CD4-positive, alpha-beta T cell (primary cell): ENCODE measurements at regions of chr5 and their contacts with region 1.

Region 1: DNA sequence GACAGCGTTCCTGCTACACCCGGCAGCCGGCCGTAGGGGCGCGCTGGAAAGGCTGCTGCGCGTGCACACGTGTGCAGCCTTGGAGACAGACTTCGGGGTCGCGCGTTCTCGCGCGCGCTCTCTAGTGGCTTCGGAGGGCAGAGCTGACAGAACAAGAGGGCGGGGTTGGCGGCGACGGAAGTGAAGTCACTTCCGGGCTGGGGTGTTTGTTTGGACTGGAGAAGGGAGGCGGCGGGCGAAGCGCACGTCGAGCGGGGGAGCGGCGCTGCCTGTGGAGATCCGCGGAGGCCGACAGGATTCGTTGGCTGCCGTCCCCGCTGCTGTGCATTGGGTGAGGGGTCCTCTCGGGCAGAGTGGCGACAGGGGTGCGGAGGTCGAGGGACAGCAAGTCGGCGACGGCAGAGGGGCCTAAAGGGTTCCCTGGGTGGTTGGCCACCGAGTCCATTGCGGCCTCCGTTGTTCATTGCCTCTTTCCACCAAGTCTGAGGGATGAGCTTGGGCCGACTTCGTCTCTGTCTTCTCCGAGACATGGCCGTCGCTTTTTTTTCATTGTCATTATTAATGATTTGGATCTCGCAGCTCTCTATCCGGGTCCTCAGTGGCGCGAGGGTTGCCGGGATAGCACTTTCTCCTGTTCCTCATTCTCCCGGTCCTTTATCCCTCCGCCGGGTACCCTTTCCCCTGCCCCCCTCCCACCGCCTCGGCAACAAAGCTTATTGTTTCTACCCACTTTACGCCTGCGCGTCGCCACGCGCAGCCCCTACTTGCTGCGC is at the start of gene PAIP2:
- DNase-seq: peak; percentile 95 to 99 (median 97)
- ATAC-seq: peak; percentile 82
- H3K4me3 ChIP-seq: peak within 1 kb of the TSS; percentile 94
- H3K4me3 Mint-ChIP-seq: peak within 1 kb of the TSS; percentile 96
- H3K27ac ChIP-seq: peak within 1 kb of the TSS; percentile 100
- H3K27ac Mint-ChIP-seq: peak within 1 kb of the TSS; percentile 95
- H3K4me1 ChIP-seq: peaks cover 34% of the 10 kb centered on the region
- H3K4me1 Mint-ChIP-seq: peaks cover 65% of the 10 kb centered on the region
- H3K27me3 ChIP-seq: no peaks in the 10 kb centered on the region
- H3K27me3 Mint-ChIP-seq: no peaks in the 10 kb centered on the region
- CTCF ChIP-seq: peak; percentile 70
- total RNA-seq, gene PAIP2: 151 to 156 TPM

Region 2: DNA sequence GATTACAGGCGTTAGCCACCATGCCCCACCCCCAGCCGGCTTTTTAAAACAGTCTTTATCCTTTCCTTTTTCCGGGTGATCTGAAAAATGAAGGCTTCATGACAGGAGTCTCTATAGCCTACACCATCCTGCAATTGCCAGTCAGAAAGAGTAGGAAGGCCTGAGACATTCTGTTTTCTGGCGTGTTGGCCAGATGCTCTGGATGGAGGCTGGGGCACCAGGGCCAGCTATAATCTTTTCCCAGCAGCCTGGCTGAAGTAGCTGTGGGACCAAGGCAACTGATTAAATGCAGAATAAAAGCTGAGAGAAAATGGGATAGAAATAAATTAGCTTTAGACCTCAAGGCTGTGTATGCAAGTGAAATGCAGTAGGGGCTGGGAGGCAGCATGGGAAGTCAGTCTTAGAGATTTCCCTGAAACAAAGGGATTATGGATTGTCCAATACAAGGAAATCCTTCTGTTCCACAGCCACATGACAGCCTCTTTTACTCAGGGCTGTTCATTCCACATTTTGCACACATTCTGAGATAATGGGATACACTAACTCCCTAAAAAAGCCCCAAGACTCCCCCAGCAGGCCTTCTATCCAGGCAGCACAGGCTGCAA is 350.7 kb before region 1 on chr5:
- CTCF ChIA-PET with region 1: no interaction called
- POLR2A ChIA-PET with region 1: no interaction called
- intact Hi-C with region 1: no loop called
- DNase-seq: no peak
- ATAC-seq: no peak
- H3K4me3 ChIP-seq: no peak overlapping the region
- H3K4me3 Mint-ChIP-seq: no peak overlapping the region
- H3K27ac ChIP-seq: no peak overlapping the region
- H3K27ac Mint-ChIP-seq: no peak overlapping the region
- H3K4me1 ChIP-seq: no peaks in the 10 kb centered on the region
- H3K4me1 Mint-ChIP-seq: no peaks in the 10 kb centered on the region
- H3K27me3 ChIP-seq: no peaks in the 10 kb centered on the region
- H3K27me3 Mint-ChIP-seq: no peaks in the 10 kb centered on the region
- CTCF ChIP-seq: no peak

Region 3: GRCh38 chr5:139293504-139294373 is 48.1 kb before region 1 on chr5 and contains the start of gene MATR3:
- CTCF ChIA-PET with region 1: interaction called, 12 read pairs
- POLR2A ChIA-PET with region 1: interaction called, 149 read pairs
- intact Hi-C with region 1: loop called (anchors 1 kb)
- DNase-seq: peak; percentile 88 to 96 (median 92)
- ATAC-seq: peak; percentile 89
- H3K4me3 ChIP-seq: peak within 1 kb of the TSS; percentile 95
- H3K4me3 Mint-ChIP-seq: peak within 1 kb of the TSS; percentile 99
- H3K27ac ChIP-seq: peak within 1 kb of the TSS; percentile 98 to 100
- H3K27ac Mint-ChIP-seq: peak within 1 kb of the TSS; percentile 99
- H3K4me1 ChIP-seq: peaks cover 27% of the 10 kb centered on the region
- H3K4me1 Mint-ChIP-seq: peaks cover 52% of the 10 kb centered on the region
- H3K27me3 ChIP-seq: no peaks in the 10 kb centered on the region
- H3K27me3 Mint-ChIP-seq: no peaks in the 10 kb centered on the region
- CTCF ChIP-seq: no peak
- total RNA-seq, gene MATR3: 376 to 401 TPM

Region 4: GRCh38 chr5:139312075-139312474 is 29.8 kb before region 1 on chr5:
- CTCF ChIA-PET with region 1: interaction called, 5 read pairs
- POLR2A ChIA-PET with region 1: interaction called, 50 read pairs
- intact Hi-C with region 1: no loop called
- DNase-seq: no peak
- ATAC-seq: no peak
- H3K4me3 ChIP-seq: no peak overlapping the region
- H3K4me3 Mint-ChIP-seq: peak overlapping the region; percentile 32
- H3K27ac ChIP-seq: no peak overlapping the region
- H3K27ac Mint-ChIP-seq: no peak overlapping the region
- H3K4me1 ChIP-seq: peaks cover 30% of the 10 kb centered on the region
- H3K4me1 Mint-ChIP-seq: peaks cover 78% of the 10 kb centered on the region
- H3K27me3 ChIP-seq: no peaks in the 10 kb centered on the region
- H3K27me3 Mint-ChIP-seq: no peaks in the 10 kb centered on the region
- CTCF ChIP-seq: no peak

Region 5: DNA sequence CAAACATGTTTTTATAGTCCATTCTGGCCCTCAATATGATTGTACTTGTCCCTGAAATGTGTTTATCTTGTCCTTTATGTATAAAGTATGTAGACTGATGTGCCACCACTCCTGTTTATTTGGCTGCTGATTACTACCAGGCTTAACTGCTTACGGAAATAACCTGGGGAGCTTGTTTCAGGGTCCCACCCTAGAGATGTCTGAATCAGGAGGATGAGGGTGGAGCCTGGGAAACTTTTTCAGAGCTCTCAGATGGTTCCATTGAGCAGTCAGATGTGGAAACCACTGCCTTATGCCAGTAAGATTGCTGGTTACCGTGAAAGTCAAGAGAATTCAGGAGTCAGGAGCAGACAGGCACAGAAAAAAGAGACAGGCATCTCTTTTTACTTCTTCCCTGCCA is 22.1 kb after region 1 on chr5:
- CTCF ChIA-PET with region 1: interaction called, 4 read pairs
- POLR2A ChIA-PET with region 1: interaction called, 10 read pairs
- intact Hi-C with region 1: no loop called
- DNase-seq: no peak
- ATAC-seq: no peak
- H3K4me3 ChIP-seq: no peak overlapping the region
- H3K4me3 Mint-ChIP-seq: no peak overlapping the region
- H3K27ac ChIP-seq: no peak overlapping the region
- H3K27ac Mint-ChIP-seq: no peak overlapping the region
- H3K4me1 ChIP-seq: peaks cover 6% of the 10 kb centered on the region
- H3K4me1 Mint-ChIP-seq: peaks cover 13% of the 10 kb centered on the region
- H3K27me3 ChIP-seq: no peaks in the 10 kb centered on the region
- H3K27me3 Mint-ChIP-seq: no peaks in the 10 kb centered on the region
- CTCF ChIP-seq: no peak

Region 6: DNA sequence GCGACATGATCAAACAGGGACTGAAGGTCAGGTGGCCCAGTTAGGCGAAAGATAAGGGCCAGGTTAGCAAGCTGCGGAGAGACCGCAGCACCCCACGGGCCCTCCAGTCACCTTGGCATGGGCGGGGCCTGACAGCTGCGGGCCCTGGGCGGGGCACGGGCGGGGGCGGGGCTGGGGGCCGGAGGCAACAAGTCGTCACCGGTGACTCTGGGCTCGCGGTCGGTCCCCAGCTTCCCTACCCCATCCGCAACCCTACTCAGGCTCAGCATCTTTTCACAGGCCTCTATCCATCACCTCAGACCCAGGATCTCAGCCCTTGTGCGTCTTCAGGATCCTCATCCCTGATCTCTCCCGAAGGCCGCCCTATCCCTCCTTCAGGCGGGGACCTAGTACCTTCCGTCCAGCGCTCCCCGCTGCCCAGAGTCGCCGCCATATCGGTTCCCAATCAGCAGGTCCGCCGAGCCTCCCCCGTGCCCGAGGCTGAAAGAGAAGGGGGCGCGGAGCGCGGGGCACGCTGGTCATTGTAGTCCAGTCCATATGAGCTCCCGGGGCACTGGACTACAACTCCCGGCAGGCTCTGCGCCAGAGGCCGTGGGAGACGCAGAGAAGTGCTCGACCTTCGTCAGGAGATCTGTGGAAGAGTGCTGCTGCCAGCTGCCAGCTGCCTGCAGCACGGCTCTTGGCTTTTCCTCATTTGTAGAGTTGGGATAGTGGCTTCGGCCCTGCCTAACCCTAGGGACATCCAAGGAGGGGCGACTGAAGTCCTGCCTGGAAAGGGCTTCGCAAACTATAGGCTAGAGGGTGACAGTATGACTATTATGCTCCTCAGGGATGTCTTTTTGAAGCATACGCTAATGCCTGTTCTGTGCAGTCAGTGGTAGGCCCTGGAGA is 97.4 kb after region 1 on chr5 and contains the start of gene DNAJC18:
- CTCF ChIA-PET with region 1: no interaction called
- POLR2A ChIA-PET with region 1: interaction called, 13 read pairs
- intact Hi-C with region 1: no loop called
- DNase-seq: peak; percentile 79 to 94 (median 88)
- ATAC-seq: peak; percentile 81
- H3K4me3 ChIP-seq: peak within 1 kb of the TSS; percentile 89
- H3K4me3 Mint-ChIP-seq: peak within 1 kb of the TSS; percentile 98
- H3K27ac ChIP-seq: peak within 1 kb of the TSS; percentile 95 to 99
- H3K27ac Mint-ChIP-seq: peak within 1 kb of the TSS; percentile 96
- H3K4me1 ChIP-seq: peaks cover 31% of the 10 kb centered on the region
- H3K4me1 Mint-ChIP-seq: peaks cover 51% of the 10 kb centered on the region
- H3K27me3 ChIP-seq: no peaks in the 10 kb centered on the region
- H3K27me3 Mint-ChIP-seq: no peaks in the 10 kb centered on the region
- CTCF ChIP-seq: no peak
- total RNA-seq, gene DNAJC18: 7.5 to 8.7 TPM

Region 7: GRCh38 chr5:139574641-139575312 is 232.9 kb after region 1 on chr5:
- CTCF ChIA-PET with region 1: no interaction called
- POLR2A ChIA-PET with region 1: no interaction called
- intact Hi-C with region 1: no loop called
- DNase-seq: peak in 4 of 14 experiments; percentile 28 to 73 (median 66)
- ATAC-seq: peak; percentile 37
- H3K4me3 ChIP-seq: no peak overlapping the region
- H3K4me3 Mint-ChIP-seq: peak overlapping the region; percentile 53
- H3K27ac ChIP-seq: no peak overlapping the region
- H3K27ac Mint-ChIP-seq: peak overlapping the region; percentile 92
- H3K4me1 ChIP-seq: peaks cover 62% of the 10 kb centered on the region
- H3K4me1 Mint-ChIP-seq: peaks cover 77% of the 10 kb centered on the region
- H3K27me3 ChIP-seq: no peaks in the 10 kb centered on the region
- H3K27me3 Mint-ChIP-seq: no peaks in the 10 kb centered on the region
- CTCF ChIP-seq: peak; percentile 79